Activated CD8-positive, alpha-beta memory T cell treated with anti-CD3 and anti-CD28 coated beads, Interleukin-2, amount 10 ng/mL, durations not matched to agents 7 days and 5 days (primary cell): ENCODE measurements at regions of chr17 and their contacts with region 1.

Region 1: GRCh38 chr17:41308251-41308917 is 725 bp downstream of the KRTAP16-1 start:
- DNase-seq: peak; percentile 82
- ATAC-seq: peak; percentile 77
- H3K4me3 Mint-ChIP-seq: peak overlapping the region; percentile 45
- H3K27ac Mint-ChIP-seq: peak overlapping the region; percentile 80
- H3K4me1 Mint-ChIP-seq: peaks cover 42% of the 10 kb centered on the region
- H3K27me3 Mint-ChIP-seq: no peaks in the 10 kb centered on the region

Region 2: DNA sequence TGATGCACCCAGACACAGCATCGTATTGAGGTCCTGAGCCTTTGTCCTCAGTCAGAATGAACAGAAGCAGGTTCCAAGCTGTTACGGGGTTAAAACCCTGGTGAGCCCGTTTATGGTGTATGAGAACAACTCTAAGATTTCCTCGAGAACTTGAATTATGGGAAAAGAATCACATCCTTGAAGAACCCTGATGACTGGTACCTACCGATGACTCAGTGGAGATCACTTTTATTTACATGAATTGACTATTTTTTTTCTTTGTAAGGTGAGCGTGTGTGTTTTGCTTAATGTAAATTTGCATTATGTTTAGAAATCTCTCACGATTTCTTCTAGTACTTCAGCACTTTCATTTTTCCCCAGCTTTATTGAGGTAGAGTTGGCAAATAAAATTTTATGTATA is 144.6 kb before region 1 on chr17:
- CTCF ChIA-PET with region 1: no interaction called
- DNase-seq: no peak
- ATAC-seq: no peak
- H3K4me3 Mint-ChIP-seq: no peak overlapping the region
- H3K27ac Mint-ChIP-seq: no peak overlapping the region
- H3K4me1 Mint-ChIP-seq: no peaks in the 10 kb centered on the region
- H3K27me3 Mint-ChIP-seq: peaks cover 6% of the 10 kb centered on the region

Region 3: DNA sequence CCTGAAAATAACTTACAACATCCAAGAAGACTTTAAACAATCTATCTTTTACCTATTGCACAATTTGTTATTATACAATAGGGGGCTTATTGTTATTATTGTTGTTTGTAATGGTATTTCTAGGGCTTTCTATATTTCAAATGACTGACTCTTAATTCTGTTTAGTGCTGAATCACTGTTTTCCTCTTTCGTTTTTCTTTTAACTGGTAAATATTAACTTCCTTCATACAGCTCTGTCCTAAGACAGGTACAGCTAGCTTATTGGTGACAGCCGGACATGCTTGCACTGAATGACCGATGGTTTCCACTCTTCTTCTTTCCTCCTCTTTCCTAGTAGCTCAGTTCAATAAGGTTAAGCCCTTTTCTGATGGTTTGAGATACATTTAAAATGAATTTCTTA is 21.3 kb before region 1 on chr17:
- CTCF ChIA-PET with region 1: no interaction called
- DNase-seq: no peak
- ATAC-seq: no peak
- H3K4me3 Mint-ChIP-seq: no peak overlapping the region
- H3K27ac Mint-ChIP-seq: no peak overlapping the region
- H3K4me1 Mint-ChIP-seq: no peaks in the 10 kb centered on the region
- H3K27me3 Mint-ChIP-seq: peaks cover 21% of the 10 kb centered on the region

Region 4: GRCh38 chr17:41322094-41322902 is 13.9 kb after region 1 on chr17:
- CTCF ChIA-PET with region 1: interaction called, 21 read pairs
- DNase-seq: peak; percentile 31
- ATAC-seq: no peak
- H3K4me3 Mint-ChIP-seq: no peak overlapping the region
- H3K27ac Mint-ChIP-seq: no peak overlapping the region
- H3K4me1 Mint-ChIP-seq: peaks cover 5% of the 10 kb centered on the region
- H3K27me3 Mint-ChIP-seq: no peaks in the 10 kb centered on the region